Panc1 (cell line): ENCODE measurements at regions of chr9 and their contacts with region 1.

Region 1: GRCh38 chr9:33737811-33738606 is 57.4 kb upstream of the PRSS3 start:
- DNase-seq: peak; percentile 32
- ATAC-seq: peak; percentile 94
- H3K4me3 ChIP-seq: no peak overlapping the region
- H3K27ac ChIP-seq: no peak overlapping the region
- H3K4me1 ChIP-seq: no peaks in the 10 kb centered on the region
- H3K27me3 ChIP-seq: no peaks in the 10 kb centered on the region
- CTCF ChIP-seq: peak; percentile 86

Region 2: GRCh38 chr9:33623658-33624586 is 114.1 kb before region 1 on chr9:
- CTCF ChIA-PET with region 1: interaction called, 13 read pairs
- POLR2A ChIA-PET with region 1: no interaction called
- in situ Hi-C with region 1: no loop called
- intact Hi-C with region 1: no loop called
- DNase-seq: peak; percentile 66
- ATAC-seq: peak; percentile 99
- H3K4me3 ChIP-seq: no peak overlapping the region
- H3K27ac ChIP-seq: no peak overlapping the region
- H3K4me1 ChIP-seq: peaks cover 1% of the 10 kb centered on the region; the same call in 1 of the 2 replicates
- H3K27me3 ChIP-seq: peaks cover 8% of the 10 kb centered on the region
- CTCF ChIP-seq: peak; percentile 93

Region 3: GRCh38 chr9:33698267-33698666 is 39.7 kb before region 1 on chr9:
- CTCF ChIA-PET with region 1: no interaction called
- POLR2A ChIA-PET with region 1: no interaction called
- in situ Hi-C with region 1: no loop called
- intact Hi-C with region 1: no loop called
- DNase-seq: no peak
- ATAC-seq: no peak
- H3K4me3 ChIP-seq: no peak overlapping the region
- H3K27ac ChIP-seq: no peak overlapping the region
- H3K4me1 ChIP-seq: no peaks in the 10 kb centered on the region
- H3K27me3 ChIP-seq: peaks cover 19% of the 10 kb centered on the region
- CTCF ChIP-seq: no peak

Region 4: GRCh38 chr9:33778700-33779351 is 40.8 kb after region 1 on chr9:
- CTCF ChIA-PET with region 1: interaction called, 35 read pairs
- POLR2A ChIA-PET with region 1: no interaction called
- in situ Hi-C with region 1: no loop called
- intact Hi-C with region 1: loop called (anchors 1 kb)
- DNase-seq: peak; percentile 57
- ATAC-seq: peak; percentile 94
- H3K4me3 ChIP-seq: no peak overlapping the region
- H3K27ac ChIP-seq: no peak overlapping the region
- H3K4me1 ChIP-seq: no peaks in the 10 kb centered on the region
- H3K27me3 ChIP-seq: no peaks in the 10 kb centered on the region
- CTCF ChIP-seq: peak; percentile 92

Region 5: DNA sequence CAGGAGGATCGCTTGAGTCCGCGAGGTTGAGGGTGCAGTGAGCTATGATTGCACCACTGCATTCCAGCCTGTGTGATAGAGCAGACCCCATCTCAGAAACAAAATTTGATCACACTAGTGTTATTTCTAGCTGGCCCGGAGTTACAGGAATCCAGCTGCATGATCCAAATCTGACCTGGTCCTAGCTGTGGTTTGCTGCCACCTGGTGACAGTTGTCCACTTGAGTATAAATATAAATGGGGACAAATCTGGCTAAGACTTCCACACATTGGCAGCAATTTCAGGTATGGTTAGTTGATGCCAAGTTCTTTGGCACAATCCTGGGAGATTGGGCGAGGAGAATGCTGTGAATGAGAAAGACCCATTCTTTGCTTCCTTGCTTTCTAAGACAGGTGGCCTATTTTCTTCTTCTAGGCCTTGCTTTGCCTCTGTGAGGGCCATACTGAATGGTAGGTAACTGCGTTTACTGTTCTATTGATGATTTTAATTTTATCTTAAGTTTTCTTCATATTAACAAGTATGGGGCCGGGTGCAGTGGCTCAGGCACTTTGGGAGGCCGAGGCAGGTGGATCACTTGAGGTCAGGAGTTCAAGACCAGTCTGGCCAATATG is 114.3 kb after region 1 on chr9:
- CTCF ChIA-PET with region 1: no interaction called
- POLR2A ChIA-PET with region 1: no interaction called
- in situ Hi-C with region 1: no loop called
- intact Hi-C with region 1: loop called (anchors 10 kb)
- DNase-seq: peak; percentile 47
- ATAC-seq: peak; percentile 86
- H3K4me3 ChIP-seq: no peak overlapping the region
- H3K27ac ChIP-seq: no peak overlapping the region
- H3K4me1 ChIP-seq: peaks cover 30% of the 10 kb centered on the region; the same call in 1 of the 2 replicates
- H3K27me3 ChIP-seq: no peaks in the 10 kb centered on the region
- CTCF ChIP-seq: peak; percentile 87

Region 6: DNA sequence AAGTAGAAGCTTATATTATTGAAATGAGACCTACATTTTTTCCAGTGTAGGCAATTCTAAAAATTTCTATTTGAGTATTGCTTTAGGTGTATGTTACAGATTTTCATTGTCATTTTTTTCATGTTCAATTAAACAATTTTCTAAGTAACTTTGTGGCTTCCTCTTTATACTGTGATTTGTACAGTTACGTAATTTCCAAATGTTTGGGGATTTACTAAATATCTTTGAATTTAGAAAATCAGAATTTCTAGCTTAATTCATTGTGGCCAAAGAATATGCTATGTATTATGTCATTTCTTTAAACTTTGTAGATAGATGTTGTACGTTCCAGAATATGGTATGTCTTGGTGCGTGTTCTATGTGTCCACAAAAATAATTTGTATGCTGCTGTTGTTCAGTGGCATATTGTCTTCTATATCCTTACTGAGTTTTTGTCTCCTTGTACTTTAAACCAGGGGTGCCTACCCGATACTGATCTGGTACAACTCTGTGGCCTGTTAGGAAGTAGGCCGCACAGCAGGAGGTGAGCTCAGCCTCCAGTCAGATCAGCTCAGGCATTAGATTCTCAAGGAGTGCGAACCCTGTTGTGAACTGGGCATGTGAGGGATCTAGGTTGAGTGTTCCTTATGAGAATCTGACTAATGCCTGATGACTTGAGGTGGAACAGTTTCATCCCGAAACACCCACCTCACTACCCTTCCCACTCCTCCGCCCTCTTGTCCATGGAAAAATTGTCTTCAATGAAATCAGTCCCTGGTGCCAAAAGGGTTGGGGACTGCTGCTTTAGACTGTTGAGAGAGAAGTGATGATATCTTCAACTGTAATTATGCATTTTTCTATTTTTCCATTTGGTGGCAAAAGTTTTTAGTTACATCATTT is 142.4 kb after region 1 on chr9:
- CTCF ChIA-PET with region 1: no interaction called
- POLR2A ChIA-PET with region 1: no interaction called
- in situ Hi-C with region 1: no loop called
- intact Hi-C with region 1: no loop called
- DNase-seq: no peak
- ATAC-seq: no peak
- H3K4me3 ChIP-seq: no peak overlapping the region
- H3K27ac ChIP-seq: no peak overlapping the region
- H3K4me1 ChIP-seq: peaks cover 36% of the 10 kb centered on the region
- H3K27me3 ChIP-seq: no peaks in the 10 kb centered on the region
- CTCF ChIP-seq: no peak